Endothelial cell of umbilical vein (primary cell): ENCODE measurements at regions of chrX and their contacts with region 1.

Region 1: DNA sequence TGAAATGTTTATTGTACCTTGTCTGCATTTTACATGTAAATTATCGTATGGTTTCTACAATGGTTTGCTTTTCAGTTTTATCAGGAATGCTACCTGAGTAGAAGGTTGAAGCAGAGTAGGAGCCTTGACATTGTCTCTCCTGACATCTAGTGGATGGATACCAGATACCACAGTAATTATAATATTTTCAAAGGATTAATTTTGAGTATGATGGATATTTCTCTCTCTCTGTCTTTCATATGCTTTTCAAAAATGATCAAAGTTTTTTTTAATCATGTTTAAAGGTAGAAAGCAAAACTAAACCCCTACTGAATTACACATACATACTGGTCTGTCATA is 109.4 kb upstream of the KLHL13 start:
- DNase-seq: peak; percentile 65
- H3K4me3 ChIP-seq: no peak overlapping the region
- H3K27ac ChIP-seq: peak overlapping the region; percentile 86
- H3K4me1 ChIP-seq: peaks cover 31% of the 10 kb centered on the region
- H3K27me3 ChIP-seq: no peaks in the 10 kb centered on the region
- CTCF ChIP-seq: peak; percentile 11 to 24
- POLR2A ChIP-seq: no peak

Region 2: DNA sequence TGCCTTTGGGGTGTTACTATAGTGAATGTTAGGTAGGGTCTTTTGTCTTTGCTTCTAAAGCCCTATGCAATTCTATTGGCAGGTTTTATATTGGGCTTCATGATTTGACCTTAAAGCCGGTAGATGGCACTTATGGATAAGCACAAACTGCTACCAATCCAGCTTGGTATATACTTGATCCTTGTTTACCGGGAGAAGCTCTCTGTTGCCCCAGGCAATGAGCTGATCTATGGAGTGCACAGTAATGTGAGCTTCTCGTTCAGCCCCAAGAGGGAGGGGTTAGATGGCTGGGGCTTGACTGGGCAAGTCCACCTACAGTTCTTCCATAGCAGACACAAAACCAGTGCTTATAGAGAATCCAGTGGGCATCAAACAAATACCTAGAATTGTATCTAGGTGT is 1476.1 kb before region 1 on chrX:
- CTCF ChIA-PET with region 1: no interaction called
- POLR2A ChIA-PET with region 1: no interaction called
- dilution Hi-C with region 1: no loop called
- intact Hi-C with region 1: no loop called
- DNase-seq: no peak
- H3K4me3 ChIP-seq: no peak overlapping the region
- H3K27ac ChIP-seq: no peak overlapping the region
- H3K4me1 ChIP-seq: no peaks in the 10 kb centered on the region
- H3K27me3 ChIP-seq: no peaks in the 10 kb centered on the region
- CTCF ChIP-seq: no peak
- POLR2A ChIP-seq: no peak

Region 3: DNA sequence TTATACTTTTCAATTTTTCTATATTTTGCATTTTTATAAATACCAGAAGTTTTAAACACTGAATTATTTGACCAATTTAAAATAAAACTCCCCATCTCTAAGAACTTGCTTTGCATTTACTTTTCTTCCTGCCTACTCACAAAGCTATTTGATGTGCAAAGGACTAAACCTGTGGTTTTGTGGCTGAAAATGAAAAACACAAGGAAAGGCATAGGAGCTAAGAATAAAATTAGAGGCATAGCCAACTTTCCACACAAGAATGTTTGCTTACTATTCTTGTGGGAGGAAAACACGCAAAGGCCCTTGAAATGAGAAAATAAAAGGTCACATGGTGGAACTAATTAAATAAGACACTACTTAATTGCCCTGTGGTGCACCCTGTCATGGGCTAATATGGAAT is 330.6 kb before region 1 on chrX:
- CTCF ChIA-PET with region 1: no interaction called
- POLR2A ChIA-PET with region 1: no interaction called
- dilution Hi-C with region 1: no loop called
- intact Hi-C with region 1: loop called (anchors 10 kb)
- DNase-seq: no peak
- H3K4me3 ChIP-seq: no peak overlapping the region
- H3K27ac ChIP-seq: no peak overlapping the region
- H3K4me1 ChIP-seq: no peaks in the 10 kb centered on the region
- H3K27me3 ChIP-seq: no peaks in the 10 kb centered on the region
- CTCF ChIP-seq: no peak
- POLR2A ChIP-seq: no peak

Region 4: GRCh38 chrX:117996918-117997480 is 229.1 kb before region 1 on chrX:
- CTCF ChIA-PET with region 1: interaction called, 4 read pairs
- POLR2A ChIA-PET with region 1: no interaction called
- dilution Hi-C with region 1: no loop called
- intact Hi-C with region 1: loop called (anchors 1 kb)
- DNase-seq: peak; percentile 11
- H3K4me3 ChIP-seq: no peak overlapping the region
- H3K27ac ChIP-seq: no peak overlapping the region
- H3K4me1 ChIP-seq: no peaks in the 10 kb centered on the region
- H3K27me3 ChIP-seq: no peaks in the 10 kb centered on the region
- CTCF ChIP-seq: peak in 1 of 2 donors; percentile 6
- POLR2A ChIP-seq: no peak

Region 5: DNA sequence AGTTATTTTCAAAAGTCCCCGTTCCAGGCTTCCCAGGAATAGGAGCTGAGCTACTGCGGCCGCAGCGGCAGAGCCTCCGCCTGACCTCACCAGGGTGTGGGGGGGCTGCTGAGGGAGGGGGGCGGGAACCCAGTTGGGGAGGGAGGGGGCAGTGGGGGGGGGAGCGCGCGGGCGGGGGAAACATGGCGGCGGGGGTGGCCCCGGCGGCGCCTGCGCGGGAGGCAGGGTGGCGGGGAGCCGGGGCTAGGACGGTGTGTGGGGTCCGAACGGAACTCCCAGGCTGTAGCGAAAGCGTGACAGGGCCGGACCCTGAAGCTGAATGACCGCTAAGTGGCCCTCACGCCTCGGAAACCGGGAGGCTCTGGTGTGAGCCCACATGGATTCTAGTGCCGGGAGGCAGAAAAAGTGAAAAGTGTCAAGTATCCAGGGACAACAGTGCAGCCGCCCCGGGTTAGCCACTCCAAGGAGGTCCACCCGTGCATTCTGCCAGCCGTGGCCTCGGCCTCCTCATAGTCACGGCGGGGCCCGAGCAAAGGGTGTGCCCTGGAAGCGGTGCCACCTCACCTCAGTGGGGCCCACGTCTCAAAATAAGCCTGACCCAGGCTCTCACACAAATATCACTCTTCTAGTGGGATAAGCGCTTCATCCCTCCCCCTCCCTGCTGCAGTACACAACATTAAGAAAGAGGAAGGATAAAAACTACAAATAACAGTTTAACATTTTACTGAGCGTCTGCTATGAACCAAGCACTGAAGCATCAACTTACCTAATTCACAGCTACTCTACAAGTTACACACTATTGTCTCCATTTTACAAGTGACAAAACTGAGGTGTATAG is 109.1 kb before region 1 on chrX and contains the start of gene KLHL13:
- CTCF ChIA-PET with region 1: interaction called, 13 read pairs
- POLR2A ChIA-PET with region 1: no interaction called
- dilution Hi-C with region 1: no loop called
- intact Hi-C with region 1: loop called (anchors 1 kb)
- DNase-seq: peak; percentile 51
- H3K4me3 ChIP-seq: peak within 1 kb of the TSS; percentile 49 to 86 (median 76)
- H3K27ac ChIP-seq: peak within 1 kb of the TSS; percentile 68
- H3K4me1 ChIP-seq: peaks cover 6% of the 10 kb centered on the region
- H3K27me3 ChIP-seq: no peaks in the 10 kb centered on the region
- CTCF ChIP-seq: no peak
- POLR2A ChIP-seq: no peak
- total RNA-seq, gene KLHL13: 15.3 and 19.0 TPM in 2 replicates